ENCODE measurements at regions of chr5 and their contacts with region 1.

Region 1: GRCh38 chr5:59390074-59390659 is 503.4 kb downstream of the PDE4D start:
- DNase-seq: peak in 1 of 2 donors; percentile 20
- ATAC-seq: no peak

Region 2: GRCh38 chr5:59209758-59210359 is 180.3 kb before region 1 on chr5:
- intact Hi-C with region 1: no loop called
- DNase-seq: no peak
- ATAC-seq: no peak

Region 3: DNA sequence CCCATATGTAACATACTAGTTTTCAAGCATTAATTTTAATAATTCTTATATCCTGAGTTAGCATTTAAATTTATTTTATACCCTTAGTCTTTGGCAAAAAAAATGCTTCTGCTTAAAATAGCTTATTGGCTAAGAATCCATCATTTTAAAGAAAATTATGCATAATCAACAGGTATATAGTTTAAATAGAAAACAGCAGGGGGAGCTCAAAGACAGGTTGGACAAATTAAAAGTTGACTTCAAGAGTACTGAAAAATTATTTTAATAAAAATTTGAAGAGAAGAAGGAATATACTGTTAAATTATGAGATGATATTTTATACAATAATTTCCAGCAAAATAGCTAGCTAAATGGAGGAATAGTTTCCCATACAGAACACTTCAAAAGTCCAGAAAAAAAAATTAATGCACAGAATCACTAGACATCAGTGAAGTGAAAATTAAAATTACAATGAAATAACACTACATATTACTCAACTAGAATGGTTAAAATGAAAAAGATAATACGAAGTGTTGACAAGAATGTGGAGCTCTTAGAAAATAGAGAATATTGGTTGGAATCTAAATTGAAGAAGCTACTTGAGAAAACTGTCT is 116.2 kb after region 1 on chr5:
- intact Hi-C with region 1: loop called in 1 of 2 experiments (anchors 10 kb)
- DNase-seq: no peak
- ATAC-seq: peak; percentile 56